ENCODE measurements at regions of chr17 and their contacts with region 1.

Region 1: GRCh38 chr17:28951991-28952975 is 965 bp upstream of the PHF12 start:
- DNase-seq: peak; percentile 98
- H3K4me3 Mint-ChIP-seq: no peak overlapping the region
- H3K27ac Mint-ChIP-seq: no peak overlapping the region
- H3K4me1 Mint-ChIP-seq: peaks cover 17% of the 10 kb centered on the region
- H3K27me3 Mint-ChIP-seq: no peaks in the 10 kb centered on the region

Region 2: DNA sequence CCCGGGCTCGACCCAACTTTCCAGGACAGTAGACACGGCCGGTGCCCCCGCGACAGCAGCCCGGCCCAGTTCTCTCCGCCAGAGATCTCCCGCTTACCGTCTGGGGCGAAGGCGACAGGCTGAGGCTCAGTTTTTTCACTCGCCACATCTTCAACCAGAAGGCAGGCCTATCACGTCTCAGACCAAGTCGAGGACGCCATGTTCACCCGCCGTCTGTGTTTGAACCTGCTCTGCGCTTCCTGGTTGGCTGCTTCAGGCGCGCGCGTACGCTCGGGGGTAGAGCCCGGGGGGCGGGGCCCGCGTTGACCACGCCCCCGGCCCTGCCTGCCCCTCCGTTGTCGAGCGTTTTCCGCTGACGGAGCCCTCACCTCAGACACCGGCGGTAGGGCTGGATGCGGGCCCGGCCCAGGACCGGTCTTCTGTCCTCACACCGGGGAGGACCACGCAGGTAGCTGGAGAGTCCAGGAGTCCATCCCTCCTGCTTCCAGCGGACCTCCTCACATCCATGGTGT is 353.4 kb before region 1 on chr17 and contains the start of gene SPAG5:
- CTCF ChIA-PET with region 1: no interaction called
- intact Hi-C with region 1: loop called (anchors 1 kb)
- DNase-seq: peak; percentile 96
- H3K4me3 Mint-ChIP-seq: peak within 1 kb of the TSS; percentile 95
- H3K27ac Mint-ChIP-seq: peak within 1 kb of the TSS; percentile 94
- H3K4me1 Mint-ChIP-seq: peaks cover 15% of the 10 kb centered on the region
- H3K27me3 Mint-ChIP-seq: no peaks in the 10 kb centered on the region
- total RNA-seq, gene SPAG5: 210 to 216 TPM

Region 3: DNA sequence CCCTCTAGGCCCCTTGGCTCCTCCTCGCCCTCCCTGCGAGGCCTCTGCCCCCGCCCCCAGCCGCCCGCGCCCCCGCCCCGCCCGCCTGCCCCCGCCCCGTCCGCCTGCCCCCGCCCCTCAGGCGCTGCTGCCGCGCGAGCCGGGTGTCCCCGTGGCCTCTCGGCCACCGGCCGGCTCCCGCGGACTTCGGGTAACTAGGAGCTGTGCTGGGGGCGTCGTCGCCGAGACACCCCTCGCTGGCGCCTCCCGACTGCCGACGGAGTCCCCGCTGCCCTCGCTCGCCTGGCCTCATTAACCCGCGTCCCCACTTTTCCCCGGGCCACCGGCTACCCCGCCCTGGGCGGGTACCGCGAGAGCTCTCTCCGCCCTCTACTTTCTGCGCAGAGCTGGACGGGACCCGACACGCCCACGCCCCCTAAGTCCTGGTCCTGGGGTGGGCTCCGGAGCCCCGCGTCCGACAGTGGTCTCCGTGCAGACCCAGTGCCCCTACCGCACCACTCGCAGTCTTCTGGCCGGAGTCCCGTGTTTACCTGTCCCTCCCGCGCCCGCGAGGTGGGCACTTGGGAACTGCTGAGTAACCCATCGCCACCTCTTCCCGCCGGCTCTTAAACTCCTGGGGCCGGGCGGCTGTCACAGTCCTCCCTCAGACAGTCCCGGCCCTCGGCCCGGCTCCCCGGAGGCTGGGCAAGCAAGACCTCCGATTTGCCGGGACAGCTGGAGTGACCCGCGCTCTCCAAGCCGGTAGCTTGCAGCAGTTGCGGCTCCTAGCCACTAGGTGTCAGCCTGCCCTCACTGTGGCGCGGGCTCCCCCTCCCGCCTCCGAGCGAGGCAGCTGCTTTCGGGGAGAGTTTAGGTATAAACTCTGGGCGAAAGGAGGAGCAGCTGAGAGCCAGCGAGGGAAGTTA is 225.8 kb before region 1 on chr17 and contains the start of gene TLCD1:
- CTCF ChIA-PET with region 1: interaction called, 43 read pairs
- intact Hi-C with region 1: loop called (anchors 1 kb)
- DNase-seq: peak; percentile 96
- H3K4me3 Mint-ChIP-seq: peak within 1 kb of the TSS; percentile 91
- H3K27ac Mint-ChIP-seq: peak within 1 kb of the TSS; percentile 99
- H3K4me1 Mint-ChIP-seq: peaks cover 42% of the 10 kb centered on the region
- H3K27me3 Mint-ChIP-seq: no peaks in the 10 kb centered on the region
- total RNA-seq, gene TLCD1: 4.0 to 4.6 TPM

Region 4: GRCh38 chr17:28842282-28843012 is 109.8 kb before region 1 on chr17 and contains the start of gene FAM222B:
- CTCF ChIA-PET with region 1: interaction called, 8 read pairs
- intact Hi-C with region 1: loop called (anchors 2 kb)
- DNase-seq: peak; percentile 88
- H3K4me3 Mint-ChIP-seq: peak within 1 kb of the TSS; percentile 99
- H3K27ac Mint-ChIP-seq: peak within 1 kb of the TSS; percentile 95
- H3K4me1 Mint-ChIP-seq: peaks cover 31% of the 10 kb centered on the region
- H3K27me3 Mint-ChIP-seq: no peaks in the 10 kb centered on the region
- total RNA-seq, gene FAM222B: 11.2 TPM

Region 5: GRCh38 chr17:28902819-28903545 is 49.3 kb before region 1 on chr17 and contains the start of gene DHRS13:
- CTCF ChIA-PET with region 1: interaction called, 7 read pairs
- intact Hi-C with region 1: loop called (anchors 1 kb)
- DNase-seq: peak; percentile 93
- H3K4me3 Mint-ChIP-seq: peak within 1 kb of the TSS; percentile 98
- H3K27ac Mint-ChIP-seq: peak within 1 kb of the TSS; percentile 88
- H3K4me1 Mint-ChIP-seq: peaks cover 35% of the 10 kb centered on the region
- H3K27me3 Mint-ChIP-seq: no peaks in the 10 kb centered on the region
- total RNA-seq, gene DHRS13: 20.1 to 20.9 TPM

Region 6: DNA sequence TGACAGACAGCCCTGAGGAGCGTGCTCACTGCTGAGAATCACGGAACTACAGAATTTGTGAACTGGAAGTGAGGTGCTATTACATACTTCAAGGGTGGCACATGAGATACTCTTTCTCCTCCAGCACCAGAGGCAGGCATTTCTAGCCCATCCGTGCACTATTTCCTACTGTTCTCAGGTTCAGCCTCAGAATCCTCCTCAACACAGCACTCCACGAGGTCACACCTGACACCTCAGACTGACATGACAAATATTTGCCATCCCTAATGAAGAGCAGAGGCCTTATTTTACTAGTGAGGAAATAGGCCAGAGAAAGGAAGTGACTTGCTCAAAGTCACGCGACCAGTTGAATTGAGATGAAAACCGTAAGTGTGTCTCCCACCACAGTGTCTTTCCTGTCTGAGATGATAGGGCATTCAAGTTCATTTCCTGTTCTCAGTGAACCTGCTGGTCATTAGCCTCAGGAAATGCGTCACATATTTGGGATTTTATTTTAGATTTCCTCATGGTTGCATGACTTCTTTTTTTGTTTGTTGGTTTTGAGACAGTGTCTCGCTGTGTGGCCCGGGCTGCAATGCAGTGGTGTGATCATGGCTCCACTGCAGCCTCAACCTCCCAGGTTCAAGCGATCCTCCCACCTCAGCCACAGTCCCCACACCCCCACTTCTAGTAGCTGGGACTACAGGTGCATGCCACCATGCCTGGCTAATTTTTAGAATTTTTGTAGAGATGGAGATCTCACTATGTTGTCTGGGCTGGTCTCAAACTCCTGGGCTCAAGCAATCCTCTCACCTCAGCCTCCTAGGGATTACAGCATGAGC is 30.1 kb after region 1 on chr17:
- CTCF ChIA-PET with region 1: no interaction called
- intact Hi-C with region 1: loop called (anchors 1 kb)
- DNase-seq: peak; percentile 82
- H3K4me3 Mint-ChIP-seq: no peak overlapping the region
- H3K27ac Mint-ChIP-seq: peak overlapping the region; percentile 96
- H3K4me1 Mint-ChIP-seq: peaks cover 22% of the 10 kb centered on the region
- H3K27me3 Mint-ChIP-seq: no peaks in the 10 kb centered on the region

Region 7: DNA sequence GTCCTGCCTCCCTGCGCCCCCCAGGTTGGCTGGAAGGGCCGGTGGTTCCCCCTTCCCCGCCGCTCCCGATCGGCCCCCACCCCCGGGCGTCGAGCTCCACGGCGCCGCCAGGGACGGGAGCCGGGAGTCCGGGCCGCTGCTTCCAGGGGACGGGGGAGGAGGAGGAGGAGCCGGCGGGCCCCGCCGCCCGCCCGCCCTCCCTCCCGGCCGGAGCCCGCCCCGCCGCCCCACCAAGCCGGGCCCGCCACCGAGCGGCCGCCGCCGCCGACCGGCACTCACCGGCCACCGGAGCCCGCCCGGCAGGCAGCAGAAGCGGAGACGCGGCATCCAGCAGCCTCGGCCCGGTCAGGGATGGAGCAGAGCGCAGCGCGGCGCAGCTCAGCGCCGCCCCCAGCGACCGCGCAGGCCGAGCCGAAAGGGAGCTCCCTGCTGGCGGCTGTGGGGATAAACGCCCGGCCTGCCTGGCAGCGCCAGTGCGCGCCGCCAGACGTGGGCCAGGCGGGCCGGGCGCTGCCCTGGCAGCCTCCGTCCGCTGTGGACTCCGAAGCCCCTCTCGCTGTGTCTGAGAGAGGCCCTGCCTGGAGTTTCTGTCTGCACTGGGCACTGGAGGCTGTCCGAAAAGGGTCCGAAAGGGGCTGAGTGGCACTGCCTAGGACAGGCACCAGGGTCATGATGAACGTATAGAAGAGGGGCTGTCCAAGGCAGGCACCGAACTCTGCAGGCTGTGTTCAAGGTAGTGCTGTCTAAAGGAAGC is 227.9 kb after region 1 on chr17 and contains the start of gene MYO18A:
- CTCF ChIA-PET with region 1: no interaction called
- intact Hi-C with region 1: no loop called
- DNase-seq: peak; percentile 84
- H3K4me3 Mint-ChIP-seq: peak within 1 kb of the TSS; percentile 55
- H3K27ac Mint-ChIP-seq: no peak within 1 kb of the TSS
- H3K4me1 Mint-ChIP-seq: peaks cover 26% of the 10 kb centered on the region
- H3K27me3 Mint-ChIP-seq: no peaks in the 10 kb centered on the region
- total RNA-seq, gene MYO18A: 23.8 to 25.0 TPM

Measured in activated naive CD4-positive, alpha-beta T cell treated with anti-CD3 and anti-CD28 coated beads for 36 hours (primary cell).